Ascending aorta (tissue), 2 donors: ENCODE measurements at regions of chr10 and their contacts with region 1.

Region 1: DNA sequence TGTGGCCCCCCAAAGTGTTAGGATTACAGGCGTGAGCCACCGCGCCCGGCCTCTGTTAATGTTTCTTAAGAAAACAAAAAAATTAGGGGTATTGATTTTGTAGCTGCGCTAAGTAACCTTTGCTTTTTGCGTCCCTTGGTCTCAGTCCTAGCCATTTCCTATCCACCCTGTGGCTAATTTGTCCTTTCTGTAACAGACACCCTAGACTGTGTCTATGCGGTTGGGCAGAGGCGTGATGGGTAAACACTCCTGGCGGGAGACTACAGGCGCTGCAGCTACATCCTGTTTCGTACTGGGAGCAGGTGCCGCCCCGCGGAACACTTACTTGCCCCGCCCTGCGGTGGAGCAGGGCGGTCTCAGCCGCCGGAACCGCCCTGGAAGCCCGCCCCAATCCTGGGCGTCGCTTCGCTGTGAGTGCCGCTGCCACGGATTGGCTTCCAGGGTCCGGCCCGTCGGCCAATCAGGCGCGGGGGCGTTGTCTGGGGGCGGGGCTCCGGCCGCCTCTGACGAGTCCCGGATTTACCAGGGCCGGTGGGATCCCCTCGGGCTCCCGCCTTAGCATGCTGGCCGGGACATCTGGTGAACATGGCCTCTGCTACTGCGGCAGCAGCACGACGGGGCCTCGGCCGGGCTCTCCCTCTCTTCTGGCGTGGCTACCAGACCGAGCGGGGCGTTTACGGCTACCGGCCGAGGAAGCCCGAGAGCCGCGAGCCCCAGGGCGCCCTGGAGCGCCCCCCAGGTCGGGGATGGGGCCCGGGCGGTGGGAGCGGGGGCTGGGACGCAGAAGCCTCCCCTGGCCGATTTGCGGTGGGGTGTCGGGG is at the start of gene DHTKD1:
- DNase-seq: peak; percentile 93 to 99
- H3K4me3 ChIP-seq: peak within 1 kb of the TSS; percentile 72 to 90
- H3K27ac ChIP-seq: peak within 1 kb of the TSS; percentile 72 to 85
- H3K4me1 ChIP-seq: peaks cover 0 to 3% of the 10 kb centered on the region in 2 donors
- H3K27me3 ChIP-seq: no peaks in the 10 kb centered on the region
- CTCF ChIP-seq: peak; percentile 21 to 63 (median 43)
- total RNA-seq, gene DHTKD1: 12.6 TPM

Region 2: DNA sequence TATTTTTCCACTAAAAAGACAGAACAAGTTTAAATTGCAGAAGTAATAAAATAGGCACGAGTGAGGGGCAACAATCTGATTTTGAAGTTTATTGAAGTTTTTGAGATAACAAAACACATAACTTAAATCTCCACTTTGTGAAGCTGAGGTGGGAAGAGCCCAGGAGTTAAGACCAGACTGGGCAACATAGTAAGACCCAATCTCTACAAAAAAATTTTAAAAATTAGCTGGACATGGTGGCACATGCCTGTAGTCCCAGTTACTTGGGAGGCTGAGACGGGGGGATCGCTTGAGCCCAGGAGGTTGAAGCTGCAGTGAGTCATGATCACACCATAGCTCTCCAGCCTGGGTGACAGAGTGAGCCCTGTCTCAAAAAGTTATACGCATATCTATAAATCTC is 37.3 kb before region 1 on chr10:
- intact Hi-C with region 1: loop called (anchors 5 kb)
- DNase-seq: no peak
- H3K4me3 ChIP-seq: no peak overlapping the region
- H3K27ac ChIP-seq: no peak overlapping the region
- H3K4me1 ChIP-seq: no peaks in the 10 kb centered on the region
- H3K27me3 ChIP-seq: no peaks in the 10 kb centered on the region
- CTCF ChIP-seq: no peak

Region 3: DNA sequence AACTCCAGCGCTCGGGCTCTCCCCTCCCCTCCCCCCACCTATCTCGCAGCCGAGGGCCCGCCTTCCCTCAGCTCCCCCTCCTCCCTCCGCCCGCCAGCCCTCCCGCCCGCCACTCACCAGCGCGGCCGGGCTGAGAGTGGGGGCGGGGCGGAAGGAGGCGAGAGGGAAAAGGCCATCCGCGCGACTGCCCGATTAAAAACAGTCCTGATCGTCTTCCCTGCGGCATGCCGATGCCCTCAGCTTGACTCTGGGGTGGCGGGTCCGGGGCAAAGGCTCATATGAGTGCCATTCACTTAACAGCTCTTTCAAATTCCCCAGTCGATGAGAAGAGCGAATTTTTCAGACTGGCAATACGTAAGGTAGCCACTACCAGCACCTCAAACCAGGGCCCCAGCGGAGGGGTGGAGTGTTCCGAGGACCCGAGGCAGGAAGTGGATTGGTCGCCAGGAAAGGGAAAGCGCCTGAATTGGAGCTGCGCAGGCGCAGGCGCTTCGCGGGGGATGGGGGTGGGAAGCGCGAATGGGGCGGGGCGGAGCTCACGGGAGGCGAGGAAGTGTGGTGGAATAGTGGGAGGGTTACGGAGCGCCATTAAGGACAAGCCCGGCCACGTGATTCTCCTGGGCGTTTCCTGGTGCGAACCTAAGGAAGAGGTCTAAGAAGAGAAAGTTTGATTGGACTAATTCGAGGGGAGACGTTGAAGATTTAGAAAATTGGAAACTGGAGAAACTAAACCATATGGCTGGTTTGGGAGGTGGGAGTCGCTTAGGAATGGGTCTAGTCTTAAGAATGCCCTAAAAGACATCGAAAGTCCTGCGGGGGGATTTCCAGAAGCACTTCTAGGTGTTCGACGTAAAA is 25.6 kb before region 1 on chr10 and contains the start of gene UPF2:
- intact Hi-C with region 1: loop called (anchors 1 kb)
- DNase-seq: peak; percentile 95 to 99
- H3K4me3 ChIP-seq: peak within 1 kb of the TSS; percentile 91 to 95
- H3K27ac ChIP-seq: peak within 1 kb of the TSS; percentile 91 to 93
- H3K4me1 ChIP-seq: peaks cover 0 to 2% of the 10 kb centered on the region in 2 donors
- H3K27me3 ChIP-seq: no peaks in the 10 kb centered on the region
- CTCF ChIP-seq: no peak
- total RNA-seq, gene UPF2: 7.9 TPM